PC-9 (cell line): ENCODE measurements at regions of chr12 and their contacts with region 1.

Region 1: DNA sequence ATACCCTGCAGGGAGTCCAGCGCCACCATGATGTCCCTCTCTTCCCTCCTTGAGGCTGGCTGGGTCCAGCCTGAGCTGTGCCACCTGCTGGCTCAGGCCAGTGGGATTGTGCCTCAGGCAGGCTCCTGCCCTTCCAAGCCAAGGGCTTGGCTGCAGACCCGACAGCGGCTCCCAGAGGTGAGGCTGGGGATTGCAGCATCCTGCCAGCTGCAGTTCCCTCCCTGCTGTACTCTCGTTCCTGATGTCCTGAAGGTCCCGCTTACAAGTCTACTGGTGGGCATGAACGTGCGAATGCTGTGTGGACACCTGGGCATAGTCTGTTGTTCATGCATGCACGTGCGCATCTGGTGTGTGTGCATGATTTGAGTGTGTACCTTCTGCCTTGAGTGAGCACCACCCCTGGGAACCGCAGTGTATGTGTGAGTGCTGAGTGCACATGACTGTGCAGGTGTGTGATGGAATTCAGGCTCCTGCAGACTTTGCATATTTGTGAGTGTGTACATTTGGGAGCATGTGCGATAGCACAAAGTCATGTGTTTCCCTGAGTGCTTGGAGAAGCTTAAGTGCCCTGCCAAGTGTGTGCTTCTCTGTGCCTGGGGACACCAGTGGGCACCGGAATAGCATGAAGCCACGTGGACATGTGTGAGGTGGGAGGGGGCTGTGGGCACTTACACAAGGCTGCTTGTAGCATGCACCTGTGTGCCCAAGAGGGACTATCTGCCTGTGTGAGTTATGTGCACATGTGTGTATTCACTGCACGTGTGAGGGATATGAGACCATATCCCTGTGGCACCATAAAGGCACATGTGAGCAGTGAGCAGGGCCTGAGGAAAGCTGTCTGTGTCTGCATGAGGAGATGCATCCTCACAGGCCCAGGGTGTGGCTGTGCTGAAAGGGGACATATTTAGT is 19.3 kb upstream of the KRT7 start:
- DNase-seq: peak; percentile 79 to 93
- H3K4me3 ChIP-seq: no peak overlapping the region
- H3K27ac ChIP-seq: peak overlapping the region; percentile 85
- H3K4me1 ChIP-seq: peaks cover 56% of the 10 kb centered on the region
- H3K27me3 ChIP-seq: no peaks in the 10 kb centered on the region
- CTCF ChIP-seq: peak; percentile 98

Region 2: GRCh38 chr12:52006726-52007157 is 207.0 kb before region 1 on chr12 and contains the start of gene TAMALIN:
- CTCF ChIA-PET with region 1: no interaction called
- POLR2A ChIA-PET with region 1: no interaction called
- intact Hi-C with region 1: no loop called
- DNase-seq: no peak
- H3K4me3 ChIP-seq: no peak within 1 kb of the TSS
- H3K27ac ChIP-seq: no peak within 1 kb of the TSS
- H3K4me1 ChIP-seq: no peaks in the 10 kb centered on the region
- H3K27me3 ChIP-seq: no peaks in the 10 kb centered on the region
- CTCF ChIP-seq: no peak
- total RNA-seq, gene TAMALIN: 0.50 TPM in 1 of 2 replicates, not detected in the other

Region 3: GRCh38 chr12:52139552-52140062 is 74.2 kb before region 1 on chr12:
- CTCF ChIA-PET with region 1: interaction called, 4 read pairs
- POLR2A ChIA-PET with region 1: no interaction called
- intact Hi-C with region 1: loop called (anchors 1 kb)
- DNase-seq: peak; percentile 62 to 78
- H3K4me3 ChIP-seq: no peak overlapping the region
- H3K27ac ChIP-seq: no peak overlapping the region
- H3K4me1 ChIP-seq: peaks cover 22% of the 10 kb centered on the region
- H3K27me3 ChIP-seq: no peaks in the 10 kb centered on the region
- CTCF ChIP-seq: peak; percentile 94

Region 4: DNA sequence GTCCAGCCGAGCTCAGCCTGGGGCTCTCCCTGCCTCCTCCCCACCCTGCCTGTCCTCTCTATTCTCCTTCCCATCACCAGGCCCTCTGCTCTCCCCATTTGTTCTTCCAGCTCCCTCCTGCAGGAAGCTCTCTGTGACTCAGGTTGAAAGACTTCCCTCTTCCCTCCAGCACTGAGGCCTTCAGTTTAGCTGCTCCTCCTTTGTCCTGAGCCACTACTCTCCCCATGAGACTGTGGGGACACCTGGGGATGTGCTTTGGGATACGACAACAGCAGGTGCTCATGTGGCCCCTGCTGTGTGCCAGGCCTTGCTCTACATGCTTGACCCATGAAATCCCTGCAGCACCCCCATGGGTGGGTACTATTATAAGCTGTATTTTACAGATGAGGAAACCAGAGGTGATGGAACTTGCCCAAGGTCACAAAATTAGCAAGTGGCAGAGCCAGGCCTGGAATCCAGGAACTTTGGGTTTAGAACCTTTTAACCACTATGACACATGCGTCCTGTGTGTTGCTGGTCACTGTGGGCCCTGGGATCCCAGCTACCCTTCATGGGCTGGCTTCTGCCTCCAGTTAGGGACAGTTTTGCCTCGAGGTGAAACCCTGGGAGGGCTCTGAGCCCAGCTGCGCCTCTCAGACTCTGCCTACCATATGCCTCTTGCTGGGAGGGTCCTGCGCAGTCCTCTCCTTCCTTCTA is 27.5 kb before region 1 on chr12:
- CTCF ChIA-PET with region 1: interaction called, 4 read pairs
- POLR2A ChIA-PET with region 1: interaction called, 26 read pairs
- intact Hi-C with region 1: loop called (anchors 1 kb)
- DNase-seq: peak; percentile 79 to 94
- H3K4me3 ChIP-seq: no peak overlapping the region; the same call in 1 of the 2 replicates
- H3K27ac ChIP-seq: peak overlapping the region; percentile 75
- H3K4me1 ChIP-seq: peaks cover 59% of the 10 kb centered on the region
- H3K27me3 ChIP-seq: no peaks in the 10 kb centered on the region
- CTCF ChIP-seq: no peak

Region 5: DNA sequence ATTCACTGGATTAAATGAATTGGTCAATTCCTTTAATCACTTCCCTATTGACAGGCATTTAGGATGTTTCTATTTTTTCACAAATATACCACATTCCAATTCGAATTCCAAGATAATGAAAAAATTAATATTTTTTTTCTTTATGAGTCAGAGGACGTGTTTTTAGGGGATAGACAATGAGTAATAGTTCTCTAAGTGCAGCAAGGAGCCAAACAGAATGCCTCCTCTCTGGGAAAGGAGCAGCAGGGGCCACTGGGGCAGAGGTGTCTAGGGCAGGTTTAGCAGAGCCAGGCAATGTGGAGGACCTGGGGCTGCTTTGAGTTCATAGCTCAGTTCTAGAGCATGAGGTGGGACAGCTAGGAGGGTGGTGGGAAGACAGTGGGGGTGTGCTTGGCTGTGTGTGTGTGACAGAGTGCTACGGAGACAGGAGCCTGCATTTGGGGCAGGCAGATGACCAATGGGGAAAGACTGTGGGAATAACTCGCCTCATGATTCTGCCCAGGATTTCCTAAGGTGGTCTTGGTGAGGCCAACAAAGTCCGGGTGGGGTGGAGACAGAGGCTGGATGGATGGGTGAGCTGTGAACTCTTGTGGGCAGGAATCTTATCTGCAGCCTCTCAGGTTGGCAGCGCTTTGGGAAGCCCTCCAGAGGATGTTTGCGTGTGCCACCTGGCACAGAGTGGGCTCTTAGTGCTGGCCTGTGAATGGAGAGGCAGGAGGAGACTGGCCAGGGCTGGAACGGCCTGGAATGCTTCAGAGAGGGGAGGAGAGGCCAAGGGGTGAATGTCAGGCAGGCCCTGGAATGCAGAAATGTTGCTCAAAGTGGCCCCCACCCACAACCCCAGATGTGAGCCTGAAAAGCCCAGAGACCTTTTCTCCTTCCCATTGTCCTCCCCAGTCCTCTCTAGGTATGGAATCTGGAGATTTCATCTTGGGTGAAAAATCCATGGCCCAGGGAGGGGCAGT is 16.8 kb after region 1 on chr12:
- CTCF ChIA-PET with region 1: interaction called, 10 read pairs
- POLR2A ChIA-PET with region 1: interaction called, 34 read pairs
- intact Hi-C with region 1: loop called (anchors 1 kb)
- DNase-seq: peak; percentile 85 to 97
- H3K4me3 ChIP-seq: peak overlapping the region; percentile 96
- H3K27ac ChIP-seq: peak overlapping the region; percentile 97
- H3K4me1 ChIP-seq: peaks cover 65% of the 10 kb centered on the region
- H3K27me3 ChIP-seq: no peaks in the 10 kb centered on the region
- CTCF ChIP-seq: no peak

Region 6: GRCh38 chr12:52258335-52258901 is 44.7 kb after region 1 on chr12:
- CTCF ChIA-PET with region 1: no interaction called
- POLR2A ChIA-PET with region 1: no interaction called
- intact Hi-C with region 1: no loop called
- DNase-seq: no peak
- H3K4me3 ChIP-seq: no peak overlapping the region
- H3K27ac ChIP-seq: no peak overlapping the region
- H3K4me1 ChIP-seq: 0 out of 2 replicates have a peak, but pooled peaks cover 8% of the 10 kb centered on the region
- H3K27me3 ChIP-seq: no peaks in the 10 kb centered on the region
- CTCF ChIP-seq: no peak

Region 7: GRCh38 chr12:52327052-52327829 is 113.5 kb after region 1 on chr12:
- CTCF ChIA-PET with region 1: no interaction called
- POLR2A ChIA-PET with region 1: no interaction called
- intact Hi-C with region 1: loop called (anchors 1 kb)
- DNase-seq: peak; percentile 86 to 94
- H3K4me3 ChIP-seq: no peak overlapping the region
- H3K27ac ChIP-seq: no peak overlapping the region
- H3K4me1 ChIP-seq: peaks cover 12% of the 10 kb centered on the region
- H3K27me3 ChIP-seq: no peaks in the 10 kb centered on the region
- CTCF ChIP-seq: peak; percentile 85

Region 8: DNA sequence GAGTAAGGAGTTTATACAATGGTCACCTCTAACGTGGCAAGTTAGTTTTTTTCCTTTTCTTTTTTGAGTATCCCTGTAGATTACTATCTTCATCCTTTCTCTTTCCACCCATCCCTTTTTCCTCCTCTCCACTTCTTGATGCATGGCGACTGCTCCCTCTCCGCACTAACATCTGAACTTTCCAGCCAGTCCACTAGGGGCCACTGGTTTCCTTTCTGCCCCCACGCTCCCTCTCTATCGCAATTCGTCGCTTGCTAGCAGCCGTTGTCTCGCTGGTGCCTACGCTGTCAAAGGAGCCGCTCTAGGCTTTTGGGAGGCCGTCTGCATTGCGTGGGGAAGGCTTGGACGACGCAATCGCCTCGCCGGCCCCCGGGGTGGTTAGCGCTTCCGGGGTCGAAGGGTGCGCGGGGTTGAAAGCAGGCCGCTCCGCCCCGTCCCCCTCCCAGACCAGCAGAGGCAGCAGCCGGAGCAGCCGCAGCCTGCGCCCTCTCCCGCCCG is 1237.9 kb after region 1 on chr12 and contains the start of gene PCBP2:
- CTCF ChIA-PET with region 1: interaction called, 10 read pairs
- POLR2A ChIA-PET with region 1: no interaction called
- intact Hi-C with region 1: no loop called
- DNase-seq: peak; percentile 97
- H3K4me3 ChIP-seq: peak within 1 kb of the TSS; percentile 84
- H3K27ac ChIP-seq: peak within 1 kb of the TSS; percentile 91
- H3K4me1 ChIP-seq: peaks cover 16% of the 10 kb centered on the region
- H3K27me3 ChIP-seq: no peaks in the 10 kb centered on the region
- CTCF ChIP-seq: peak; percentile 86
- total RNA-seq, gene PCBP2: 668 and 833 TPM in 2 replicates